ENCODE measurements at regions of chr17 and their contacts with region 1.

Region 1: GRCh38 chr17:75182569-75183450 is at the start of gene SUMO2:
- DNase-seq: peak; percentile 97
- H3K4me3 Mint-ChIP-seq: peak within 1 kb of the TSS; percentile 92
- H3K27ac Mint-ChIP-seq: peak within 1 kb of the TSS; percentile 97
- H3K4me1 Mint-ChIP-seq: peaks cover 40% of the 10 kb centered on the region
- H3K27me3 Mint-ChIP-seq: no peaks in the 10 kb centered on the region
- total RNA-seq, gene SUMO2: 633 to 688 TPM

Region 2: GRCh38 chr17:74776044-74776977 is 406.5 kb before region 1 on chr17 and contains the start of gene NAT9:
- CTCF ChIA-PET with region 1: no interaction called
- intact Hi-C with region 1: loop called (anchors 10 kb)
- DNase-seq: peak; percentile 98
- H3K4me3 Mint-ChIP-seq: peak within 1 kb of the TSS; percentile 100
- H3K27ac Mint-ChIP-seq: peak within 1 kb of the TSS; percentile 89
- H3K4me1 Mint-ChIP-seq: peaks cover 62% of the 10 kb centered on the region
- H3K27me3 Mint-ChIP-seq: no peaks in the 10 kb centered on the region
- total RNA-seq, gene NAT9: 42.1 to 43.9 TPM

Region 3: GRCh38 chr17:74945543-74945942 is 237.3 kb before region 1 on chr17:
- CTCF ChIA-PET with region 1: no interaction called
- intact Hi-C with region 1: no loop called
- DNase-seq: no peak
- H3K4me3 Mint-ChIP-seq: no peak overlapping the region
- H3K27ac Mint-ChIP-seq: no peak overlapping the region
- H3K4me1 Mint-ChIP-seq: no peaks in the 10 kb centered on the region
- H3K27me3 Mint-ChIP-seq: peaks cover 4% of the 10 kb centered on the region

Region 4: DNA sequence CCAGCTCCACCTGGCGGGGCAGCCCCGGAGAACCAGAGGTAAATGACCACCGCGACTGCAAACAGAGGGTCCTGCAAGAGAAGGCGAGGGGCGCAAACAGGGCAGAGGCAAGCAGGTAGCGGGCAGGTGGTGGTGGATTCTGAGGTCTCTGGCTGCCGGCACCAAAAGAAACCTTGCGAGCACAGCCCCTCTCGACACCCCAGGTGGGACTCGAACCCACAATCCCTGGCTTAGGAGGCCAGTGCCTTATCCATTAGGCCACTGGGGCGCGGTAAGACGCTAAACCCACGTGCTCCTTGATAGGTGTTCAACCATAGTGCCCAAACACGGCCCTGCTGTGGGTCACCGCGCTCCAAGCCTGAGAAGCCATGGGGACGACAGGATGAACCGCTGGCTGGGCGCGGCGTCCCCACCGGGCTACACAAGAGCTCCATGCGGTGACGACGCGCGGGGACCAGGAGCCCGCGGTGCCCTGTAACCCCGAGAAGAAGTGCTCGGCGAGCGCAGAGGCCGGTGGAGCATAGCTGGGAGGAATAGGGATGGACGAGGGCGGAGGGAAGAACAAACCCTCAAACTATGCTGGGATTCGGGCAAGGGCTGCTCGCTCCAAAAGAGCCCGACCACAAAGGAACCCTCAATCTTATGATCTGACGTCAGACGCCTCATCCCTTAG is 148.4 kb before region 1 on chr17:
- CTCF ChIA-PET with region 1: no interaction called
- intact Hi-C with region 1: loop called (anchors 1 kb)
- DNase-seq: peak; percentile 96
- H3K4me3 Mint-ChIP-seq: peak overlapping the region; percentile 95
- H3K27ac Mint-ChIP-seq: peak overlapping the region; percentile 93
- H3K4me1 Mint-ChIP-seq: peaks cover 46% of the 10 kb centered on the region
- H3K27me3 Mint-ChIP-seq: peaks cover 3% of the 10 kb centered on the region

Region 5: DNA sequence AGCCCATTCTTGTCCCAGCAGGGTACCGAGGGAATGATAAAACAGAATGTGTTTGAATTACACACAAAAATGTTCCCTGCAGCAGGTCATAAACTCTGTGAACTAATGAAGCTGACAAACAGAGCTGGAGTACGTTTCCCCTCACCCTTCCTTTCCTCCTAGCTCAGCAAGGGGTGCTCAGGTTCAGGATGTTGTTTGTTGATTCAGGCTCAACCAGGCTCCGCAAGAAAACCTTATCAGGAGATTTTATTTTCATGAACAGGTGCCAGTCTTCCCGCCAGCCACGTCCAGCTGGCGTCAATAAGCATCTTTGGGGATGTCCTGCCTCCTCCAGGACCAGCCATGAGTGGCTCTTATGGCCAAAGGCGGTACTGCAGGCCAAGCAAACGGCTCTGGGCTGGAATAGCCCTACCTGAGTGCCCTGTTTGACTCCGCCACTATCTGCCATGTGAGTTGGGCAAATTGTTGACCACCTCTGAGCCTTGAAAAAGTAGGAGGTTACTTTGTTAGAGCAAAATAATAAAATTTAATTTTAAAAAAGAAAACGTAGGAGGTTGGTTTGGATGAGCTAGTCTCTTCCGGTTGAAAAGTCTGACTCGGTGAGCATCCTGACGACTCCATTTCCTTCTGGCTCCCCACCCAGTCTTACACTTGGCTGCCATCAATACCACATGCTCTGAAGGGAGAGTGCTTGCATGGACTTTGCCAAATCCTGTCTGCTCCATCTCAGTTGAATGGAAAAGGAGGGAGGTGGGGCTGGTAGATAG is 77.0 kb before region 1 on chr17:
- CTCF ChIA-PET with region 1: no interaction called
- intact Hi-C with region 1: no loop called
- DNase-seq: peak; percentile 43
- H3K4me3 Mint-ChIP-seq: no peak overlapping the region
- H3K27ac Mint-ChIP-seq: no peak overlapping the region
- H3K4me1 Mint-ChIP-seq: peaks cover 7% of the 10 kb centered on the region
- H3K27me3 Mint-ChIP-seq: no peaks in the 10 kb centered on the region

Region 6: DNA sequence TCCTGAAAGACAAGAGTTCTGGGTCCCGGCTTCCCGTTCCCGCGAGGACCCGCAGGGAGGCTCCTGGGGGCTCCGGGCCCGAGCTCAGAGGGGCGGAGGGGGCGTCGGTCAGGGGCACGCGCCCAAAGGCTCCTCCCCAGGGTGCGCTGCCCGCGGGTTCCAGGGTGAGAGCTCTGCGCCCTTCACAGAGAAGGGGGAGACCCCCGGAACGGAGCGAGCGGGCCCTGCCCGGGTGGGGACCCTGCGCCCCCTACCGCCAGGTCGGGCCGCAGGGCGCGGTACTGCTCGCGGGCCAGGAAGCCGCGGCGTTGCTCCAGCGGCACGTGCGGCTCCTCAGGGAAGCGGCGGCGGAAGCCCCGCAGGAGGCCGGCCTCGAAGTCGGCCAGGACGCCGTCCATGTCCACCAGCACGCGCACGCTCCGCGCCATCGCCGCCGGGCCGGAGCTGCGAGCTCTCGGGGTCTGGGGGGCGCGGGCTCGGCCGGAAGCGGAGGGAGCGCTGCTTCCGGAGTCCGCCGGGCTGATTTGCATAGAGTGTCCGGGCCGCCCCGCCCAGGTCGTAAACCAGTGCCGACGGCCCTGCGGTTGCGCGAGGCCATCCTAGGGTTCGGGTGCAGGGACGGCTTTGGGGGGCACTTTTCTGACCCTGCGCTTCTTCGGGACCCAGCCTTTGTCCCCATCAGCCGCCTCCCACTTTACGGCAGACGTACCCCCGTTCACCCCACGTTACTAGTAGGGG is 51.4 kb before region 1 on chr17 and contains the start of gene NT5C:
- CTCF ChIA-PET with region 1: no interaction called
- intact Hi-C with region 1: loop called (anchors 2 kb)
- DNase-seq: peak; percentile 71
- H3K4me3 Mint-ChIP-seq: peak within 1 kb of the TSS; percentile 85
- H3K27ac Mint-ChIP-seq: peak within 1 kb of the TSS; percentile 86
- H3K4me1 Mint-ChIP-seq: peaks cover 16% of the 10 kb centered on the region
- H3K27me3 Mint-ChIP-seq: no peaks in the 10 kb centered on the region
- total RNA-seq, gene NT5C: 49.7 to 55.2 TPM

Region 7: DNA sequence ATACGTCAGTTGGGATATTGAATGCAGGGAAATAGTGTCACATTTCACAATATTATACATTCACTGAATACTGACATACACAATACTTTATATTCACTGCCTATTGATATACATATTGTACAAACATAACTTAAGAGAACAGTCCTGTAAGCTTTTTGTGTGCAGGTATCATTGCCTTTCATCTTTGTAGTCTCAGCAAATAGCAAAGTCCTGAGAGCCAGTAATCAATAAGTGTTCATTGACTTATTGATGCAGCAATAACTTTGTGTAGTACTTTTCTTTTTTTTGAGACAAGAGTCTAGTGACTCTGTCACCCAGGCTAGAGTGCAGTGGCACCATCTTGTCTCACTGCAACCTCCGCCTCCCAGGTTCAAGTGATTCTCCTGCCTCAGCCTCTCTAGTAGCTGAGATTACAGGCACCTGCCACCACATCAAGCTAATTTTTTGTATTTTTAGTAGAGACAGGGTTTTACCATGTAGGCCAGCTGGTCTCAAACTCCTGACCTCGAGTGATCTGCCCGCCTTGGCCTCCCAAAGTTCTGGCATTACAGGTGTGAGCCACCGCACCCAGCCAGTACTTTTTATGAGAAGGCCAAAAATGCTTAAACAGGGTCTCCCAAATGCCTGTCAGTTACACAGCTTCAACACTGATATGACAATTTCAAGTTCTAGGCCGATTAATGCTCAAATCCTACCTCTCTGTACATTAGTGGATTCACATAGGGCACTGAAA is 17.2 kb after region 1 on chr17:
- CTCF ChIA-PET with region 1: interaction called, 64 read pairs
- intact Hi-C with region 1: loop called (anchors 1 kb)
- DNase-seq: no peak
- H3K4me3 Mint-ChIP-seq: no peak overlapping the region
- H3K27ac Mint-ChIP-seq: no peak overlapping the region
- H3K4me1 Mint-ChIP-seq: peaks cover 8% of the 10 kb centered on the region
- H3K27me3 Mint-ChIP-seq: no peaks in the 10 kb centered on the region

Region 8: DNA sequence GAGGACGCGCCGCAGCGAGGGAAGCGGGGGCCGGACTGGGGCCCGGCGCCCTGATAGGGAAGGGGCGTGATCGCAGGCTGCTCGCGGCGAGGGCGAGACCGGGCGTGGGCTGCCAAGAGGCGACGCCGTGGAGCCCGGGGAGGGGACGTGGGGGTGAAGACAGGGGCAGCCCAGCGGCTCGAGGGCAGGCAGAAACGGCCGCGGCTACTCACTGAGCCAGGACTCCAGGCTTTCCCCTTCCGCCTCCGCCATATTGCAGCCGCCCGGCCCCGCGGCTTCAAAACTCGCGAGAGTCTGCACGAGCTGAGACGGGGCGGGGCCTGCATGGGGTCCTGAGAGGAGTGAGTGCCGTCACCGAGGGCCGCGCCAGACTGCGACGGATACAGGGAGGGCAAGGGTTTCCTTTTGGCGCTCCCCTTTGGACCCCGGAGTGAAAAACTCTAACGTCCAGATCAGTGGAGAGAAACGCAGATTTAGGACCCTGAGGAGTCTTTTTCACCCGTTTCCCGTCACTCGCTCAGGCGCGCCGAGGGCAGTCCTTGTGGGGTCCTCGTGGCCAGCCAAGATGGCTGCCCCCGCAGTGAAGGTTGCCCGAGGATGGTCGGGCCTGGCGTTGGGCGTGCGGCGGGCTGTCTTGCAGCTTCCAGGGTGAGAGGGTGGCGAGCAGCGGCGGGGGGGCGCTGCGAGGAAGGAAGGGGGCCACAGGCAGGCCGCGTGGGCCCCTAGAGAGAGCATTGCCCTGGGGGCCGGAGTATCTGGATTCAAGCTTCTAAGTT is 78.7 kb after region 1 on chr17 and contains the starts of genes GGA3 and MRPS7:
- CTCF ChIA-PET with region 1: no interaction called
- intact Hi-C with region 1: loop called (anchors 2 kb)
- DNase-seq: peak; percentile 98
- H3K4me3 Mint-ChIP-seq: peak within 1 kb of the TSS; percentile 93
- H3K27ac Mint-ChIP-seq: peak within 1 kb of the TSS; percentile 99
- H3K4me1 Mint-ChIP-seq: peaks cover 53% of the 10 kb centered on the region
- H3K27me3 Mint-ChIP-seq: no peaks in the 10 kb centered on the region
- total RNA-seq, gene GGA3: 65.7 to 66.1 TPM
- total RNA-seq, gene MRPS7: 73.3 to 78.3 TPM

Region 9: DNA sequence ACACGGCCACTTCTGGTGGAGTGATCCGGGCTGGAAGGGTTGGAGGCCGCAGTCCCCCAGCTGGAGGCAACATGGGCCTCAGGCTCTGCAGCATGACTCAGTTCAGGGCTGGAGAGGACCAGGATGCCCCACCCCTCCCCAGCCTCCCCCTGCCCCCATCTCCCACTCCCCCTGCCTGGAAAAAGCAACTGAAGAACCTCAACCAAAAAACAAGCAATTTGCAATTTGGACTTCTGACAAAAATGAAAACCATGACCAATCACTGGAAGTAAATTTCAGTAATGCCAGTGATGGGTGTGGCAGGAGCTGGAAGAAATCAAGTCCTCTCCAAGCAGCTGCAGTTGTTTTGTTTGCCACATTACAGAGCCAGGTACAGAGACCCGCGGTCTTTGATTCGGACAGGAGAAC is 94.9 kb after region 1 on chr17:
- CTCF ChIA-PET with region 1: no interaction called
- intact Hi-C with region 1: no loop called
- DNase-seq: no peak
- H3K4me3 Mint-ChIP-seq: no peak overlapping the region
- H3K27ac Mint-ChIP-seq: no peak overlapping the region
- H3K4me1 Mint-ChIP-seq: peaks cover 17% of the 10 kb centered on the region
- H3K27me3 Mint-ChIP-seq: no peaks in the 10 kb centered on the region

Region 10: DNA sequence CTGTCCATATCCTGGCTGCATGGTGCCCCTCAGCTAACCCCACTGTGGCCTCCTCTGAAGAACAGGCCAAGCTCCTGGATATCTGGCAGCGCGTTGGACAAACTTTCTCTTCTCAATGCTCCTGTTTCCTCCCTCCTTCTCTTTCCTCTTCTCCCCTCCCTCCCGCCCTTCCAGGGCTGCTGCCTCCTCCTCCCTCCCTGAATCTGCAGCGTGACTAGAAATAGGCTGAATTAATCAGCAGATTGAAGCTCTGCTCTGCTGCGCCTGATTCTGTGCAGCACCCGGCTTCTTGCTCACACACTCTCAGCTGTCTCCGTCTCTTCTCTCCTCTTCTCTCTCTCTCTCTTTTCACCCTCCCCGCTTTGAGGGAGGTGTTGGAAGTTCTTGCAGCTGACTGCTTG is 293.5 kb after region 1 on chr17:
- CTCF ChIA-PET with region 1: no interaction called
- intact Hi-C with region 1: no loop called
- DNase-seq: no peak
- H3K4me3 Mint-ChIP-seq: no peak overlapping the region
- H3K27ac Mint-ChIP-seq: no peak overlapping the region
- H3K4me1 Mint-ChIP-seq: no peaks in the 10 kb centered on the region
- H3K27me3 Mint-ChIP-seq: no peaks in the 10 kb centered on the region